GM18951 (cell line): ENCODE measurements at regions of chr2 and their contacts with region 1.

Region 1: GRCh38 chr2:225766431-225766830 is 366.9 kb downstream of the NYAP2 start:
- POLR2A ChIP-seq: no peak

Region 2: DNA sequence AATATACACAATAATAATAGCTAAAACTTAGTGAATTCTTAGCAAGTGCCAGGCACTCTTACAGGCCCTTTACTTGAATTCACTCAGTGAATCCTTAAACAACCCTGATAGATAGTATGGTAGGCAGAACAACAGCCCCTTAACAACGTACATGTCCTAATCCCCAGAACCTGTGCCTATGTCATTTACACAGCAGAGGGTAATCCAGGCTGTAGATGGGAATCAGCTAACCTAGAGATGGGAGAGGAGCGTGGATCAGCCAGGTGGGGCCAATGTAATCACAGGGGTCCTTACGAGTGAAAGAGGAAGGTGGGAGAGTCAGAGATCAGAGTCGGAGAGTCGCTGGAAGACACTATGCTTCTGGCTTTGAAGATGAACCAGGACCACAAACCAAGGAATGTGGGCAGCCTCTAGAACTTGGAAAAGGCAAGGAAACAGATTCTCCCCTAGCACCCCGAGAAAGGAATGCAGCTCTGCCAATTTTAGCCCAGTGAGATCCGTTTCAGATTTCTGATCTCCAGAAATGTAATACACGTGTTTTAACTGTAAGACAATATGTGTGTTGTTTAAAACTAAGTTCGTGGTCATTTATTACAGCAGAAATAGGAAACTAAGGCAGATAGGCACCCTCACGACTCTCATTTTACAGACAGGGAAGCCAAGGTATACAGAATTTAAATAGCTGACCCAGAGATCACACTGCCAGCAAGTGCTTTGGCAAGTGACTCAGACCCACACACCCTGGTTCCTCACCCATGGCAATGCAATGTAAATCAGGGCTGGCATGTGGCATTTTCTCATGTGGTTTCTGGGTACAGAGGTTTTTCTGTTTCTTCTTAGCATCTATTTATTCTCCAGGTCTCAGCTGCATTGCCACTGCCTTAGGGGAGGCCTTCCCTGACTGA is 793.1 kb before region 1 on chr2:
- in situ Hi-C with region 1: no loop called
- POLR2A ChIP-seq: no peak

Region 3: GRCh38 chr2:225637259-225637658 is 129.2 kb before region 1 on chr2:
- in situ Hi-C with region 1: no loop called
- POLR2A ChIP-seq: no peak

Region 4: DNA sequence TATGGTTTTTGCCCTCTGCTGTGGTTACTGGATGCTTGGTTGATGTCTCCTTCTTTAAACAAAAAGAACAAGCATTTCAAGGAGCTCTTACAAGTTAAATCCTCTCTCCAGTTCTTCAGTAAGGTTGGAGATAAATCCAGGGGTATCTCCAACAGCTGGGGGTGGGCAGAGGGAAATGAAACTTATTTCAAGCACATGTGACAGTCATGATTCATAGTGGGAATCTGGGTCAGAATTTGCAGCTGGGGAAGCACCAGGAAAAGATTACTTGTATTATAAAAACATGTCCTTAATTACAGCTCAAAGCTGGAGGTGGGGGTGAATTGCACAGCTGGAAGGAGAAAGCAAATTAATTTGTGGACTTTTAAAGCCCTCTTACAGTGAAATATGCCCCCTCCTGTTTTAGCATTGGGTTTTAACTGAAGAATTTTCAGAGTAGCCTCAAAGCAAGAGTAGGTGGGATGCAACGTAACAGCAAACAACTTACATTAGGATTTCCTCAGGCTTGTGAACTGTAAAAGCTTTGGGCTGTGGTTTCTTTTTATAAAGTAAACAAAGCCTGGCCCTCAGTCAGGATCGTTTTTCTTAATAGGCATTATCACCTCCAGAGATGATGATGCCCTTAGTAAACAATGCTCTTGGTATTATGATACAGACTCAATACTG is 229.5 kb after region 1 on chr2:
- in situ Hi-C with region 1: no loop called
- POLR2A ChIP-seq: no peak

Region 5: GRCh38 chr2:227296671-227297405 is 1530.4 kb after region 1 on chr2:
- in situ Hi-C with region 1: loop called (anchors 10 kb)
- POLR2A ChIP-seq: no peak